Heart left ventricle (tissue), 16 donors: ENCODE measurements at regions of chr22 and their contacts with region 1.

Region 1: GRCh38 chr22:28656181-28656580 is 23.5 kb downstream of the TTC28 start:
- DNase-seq: no peak
- ATAC-seq: no peak
- H3K4me3 ChIP-seq: no peak overlapping the region
- H3K27ac ChIP-seq: no peak overlapping the region
- H3K4me1 ChIP-seq: no peaks in the 10 kb centered on the region
- H3K27me3 ChIP-seq: no peaks in the 10 kb centered on the region
- CTCF ChIP-seq: no peak
- POLR2A ChIP-seq: no peak

Region 2: DNA sequence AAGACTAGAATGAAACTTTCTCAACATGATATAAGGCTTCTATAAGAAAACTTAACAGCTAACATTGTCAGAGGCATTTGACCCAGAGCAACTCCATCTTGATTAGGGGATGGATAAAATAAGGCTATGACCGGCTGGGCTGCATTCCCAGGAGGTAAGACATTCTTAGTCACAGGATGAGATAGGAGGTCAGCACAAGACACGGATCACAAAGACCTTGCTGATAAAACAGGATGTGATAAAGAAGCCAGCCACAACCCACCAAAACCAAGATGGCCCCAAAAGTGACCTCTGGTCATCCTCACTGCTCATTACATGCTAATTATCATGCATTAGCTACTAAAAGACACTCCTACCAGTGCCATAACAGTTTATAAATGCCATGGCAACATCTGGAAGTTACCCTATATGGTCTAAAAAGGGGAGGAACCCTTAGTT is 111.7 kb before region 1 on chr22:
- intact Hi-C with region 1: no loop called
- DNase-seq: no peak
- ATAC-seq: no peak
- H3K4me3 ChIP-seq: no peak overlapping the region
- H3K27ac ChIP-seq: no peak overlapping the region
- H3K4me1 ChIP-seq: no peaks in the 10 kb centered on the region
- H3K27me3 ChIP-seq: no peaks in the 10 kb centered on the region
- CTCF ChIP-seq: no peak
- POLR2A ChIP-seq: no peak

Region 3: GRCh38 chr22:28734393-28734792 is 78.2 kb after region 1 on chr22:
- intact Hi-C with region 1: loop called in 1 of 10 experiments (anchors 5 kb)
- DNase-seq: no peak
- ATAC-seq: no peak
- H3K4me3 ChIP-seq: no peak overlapping the region
- H3K27ac ChIP-seq: no peak overlapping the region
- H3K4me1 ChIP-seq: no peaks in the 10 kb centered on the region
- H3K27me3 ChIP-seq: no peaks in the 10 kb centered on the region
- CTCF ChIP-seq: no peak
- POLR2A ChIP-seq: no peak

Region 4: GRCh38 chr22:29030016-29030622 is 373.9 kb after region 1 on chr22:
- intact Hi-C with region 1: no loop called
- DNase-seq: no peak
- ATAC-seq: no peak
- H3K4me3 ChIP-seq: peak overlapping the region; percentile 22 to 60 (median 54)
- H3K27ac ChIP-seq: peak overlapping the region in 11 of 12 donors; percentile 8 to 85 (median 75)
- H3K4me1 ChIP-seq: peaks cover 0 to 30% (median 15%) of the 10 kb centered on the region in 12 donors
- H3K27me3 ChIP-seq: peaks cover 0 to 8% (median 0%) of the 10 kb centered on the region in 9 donors
- CTCF ChIP-seq: no peak
- POLR2A ChIP-seq: no peak